Activated CD4-positive, alpha-beta T cell treated with anti-CD3 and anti-CD28 coated beads, Interleukin-2, amount 10 ng/mL, durations not matched to agents 24 days and 14 days (primary cell): ENCODE measurements at regions of chr4 and their contacts with region 1.

Region 1: DNA sequence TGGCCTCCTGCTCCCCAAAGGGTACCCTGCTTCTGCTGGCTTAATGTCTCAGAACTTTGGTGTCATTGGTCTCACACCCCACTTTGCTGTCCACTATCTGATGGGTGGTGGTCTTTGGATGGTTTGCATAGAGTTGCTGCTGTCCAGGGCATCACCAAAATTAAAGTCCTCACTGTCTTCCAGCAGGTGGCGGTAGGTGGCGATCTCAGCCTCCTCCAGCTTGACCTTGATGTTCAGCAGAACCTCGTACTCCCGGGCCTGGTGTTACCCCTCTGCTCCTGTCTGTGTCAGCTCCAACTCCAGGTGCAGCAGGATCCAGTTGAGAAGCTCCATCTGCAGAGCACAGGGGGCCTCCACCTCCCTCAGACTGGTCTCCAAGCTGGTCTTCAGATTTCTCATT is 1169.5 kb upstream of the PABPC4L start:
- DNase-seq: no peak
- H3K4me3 Mint-ChIP-seq: no peak overlapping the region
- H3K27ac Mint-ChIP-seq: no peak overlapping the region
- H3K4me1 Mint-ChIP-seq: no peaks in the 10 kb centered on the region
- H3K27me3 Mint-ChIP-seq: no peaks in the 10 kb centered on the region

Region 2: GRCh38 chr4:135684001-135684400 is 312.9 kb after region 1 on chr4:
- intact Hi-C with region 1: no loop called
- DNase-seq: no peak
- H3K4me3 Mint-ChIP-seq: no peak overlapping the region
- H3K27ac Mint-ChIP-seq: no peak overlapping the region
- H3K4me1 Mint-ChIP-seq: no peaks in the 10 kb centered on the region
- H3K27me3 Mint-ChIP-seq: no peaks in the 10 kb centered on the region

Region 3: DNA sequence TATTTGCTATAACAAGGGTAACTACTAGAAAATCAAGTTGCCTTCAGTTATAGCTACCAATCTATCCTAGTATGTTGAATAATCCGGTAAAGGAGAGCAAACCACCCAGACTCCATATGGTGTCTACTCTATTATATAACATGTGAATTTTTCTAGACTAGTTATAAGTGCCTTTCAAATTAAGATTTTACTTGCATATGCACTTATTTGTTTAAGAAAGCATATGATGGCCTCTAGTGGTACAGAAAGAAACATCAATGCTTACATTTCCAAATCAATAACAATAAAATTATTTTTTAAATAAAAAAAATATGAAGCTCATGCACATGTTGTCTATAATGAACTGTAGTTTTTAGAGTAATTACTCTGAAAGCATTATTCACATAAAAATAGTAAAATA is 346.9 kb after region 1 on chr4:
- intact Hi-C with region 1: no loop called
- DNase-seq: no peak
- H3K4me3 Mint-ChIP-seq: no peak overlapping the region
- H3K27ac Mint-ChIP-seq: no peak overlapping the region
- H3K4me1 Mint-ChIP-seq: no peaks in the 10 kb centered on the region
- H3K27me3 Mint-ChIP-seq: no peaks in the 10 kb centered on the region

Region 4: DNA sequence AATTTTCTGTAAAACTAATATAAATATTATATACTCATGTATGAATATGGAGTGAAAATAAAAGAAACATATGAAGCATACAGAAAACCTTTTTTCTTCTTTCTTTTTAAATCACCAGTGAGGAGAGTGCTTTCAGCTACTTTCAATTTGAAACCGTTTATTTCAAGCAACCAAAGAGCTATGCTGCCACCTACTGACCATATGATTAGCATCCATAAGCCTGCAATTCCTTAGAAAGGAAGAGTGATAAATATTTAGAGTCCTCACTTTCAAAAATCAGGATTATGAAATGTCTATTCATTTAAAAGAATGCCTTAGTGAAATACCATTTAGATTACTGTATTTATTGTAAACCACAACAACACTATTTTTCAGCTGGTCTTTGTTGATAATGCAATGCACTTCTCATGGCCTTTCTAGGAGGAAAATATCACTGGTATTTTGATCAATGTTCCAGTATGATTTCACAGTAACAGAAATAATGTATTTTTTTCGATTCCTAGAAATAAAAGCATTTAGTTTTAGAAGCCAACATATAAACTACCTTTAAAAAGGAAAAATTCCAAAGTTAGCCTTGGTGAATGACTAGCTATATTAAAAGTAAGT is 1493.5 kb after region 1 on chr4:
- intact Hi-C with region 1: loop called (anchors 10 kb)
- DNase-seq: peak; percentile 77
- H3K4me3 Mint-ChIP-seq: no peak overlapping the region
- H3K27ac Mint-ChIP-seq: no peak overlapping the region
- H3K4me1 Mint-ChIP-seq: no peaks in the 10 kb centered on the region
- H3K27me3 Mint-ChIP-seq: no peaks in the 10 kb centered on the region